ENCODE measurements at regions of chr14 and their contacts with region 1.

Region 1: DNA sequence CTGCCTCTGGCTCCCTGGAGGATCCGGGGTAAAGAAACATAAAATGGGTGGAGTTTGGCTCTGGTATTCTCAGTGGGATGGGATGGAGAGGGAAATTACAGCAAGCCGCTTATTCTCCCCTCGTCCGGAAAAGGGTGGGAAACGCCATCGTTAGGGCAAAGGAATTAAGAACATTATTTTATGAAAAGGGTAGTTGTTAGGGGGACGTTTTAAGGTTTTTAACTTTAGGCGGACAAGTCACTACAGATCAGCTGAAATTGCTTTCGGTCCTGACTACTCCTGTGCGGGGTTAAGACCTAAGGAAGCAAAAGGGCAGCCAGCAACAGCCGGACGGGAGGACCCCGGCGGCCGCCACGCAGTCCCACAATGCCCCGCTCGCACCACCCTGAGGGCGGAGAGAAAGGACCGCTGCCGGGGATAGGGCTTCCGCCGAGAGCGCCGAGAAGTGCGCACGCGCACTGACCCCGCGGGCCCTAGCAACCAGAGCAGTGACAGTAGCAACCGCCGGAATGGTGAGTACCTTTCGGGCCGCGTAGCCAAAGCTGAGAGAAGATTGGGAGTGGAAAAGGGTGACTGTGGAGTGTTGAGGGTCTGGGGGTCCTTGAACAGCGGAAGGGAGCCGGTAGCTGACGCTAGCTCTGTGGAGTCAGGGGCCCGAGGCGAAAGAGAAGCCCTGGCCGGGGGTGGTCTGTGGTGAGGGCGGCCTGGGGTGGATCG is at the start of gene DNAL1:
- DNase-seq: peak; percentile 83 to 94 (median 90)
- ATAC-seq: peak; percentile 97
- H3K4me3 ChIP-seq: peak within 1 kb of the TSS; percentile 67 to 72
- H3K4me3 Mint-ChIP-seq: peak within 1 kb of the TSS; percentile 89
- H3K27ac ChIP-seq: peak within 1 kb of the TSS; percentile 61 to 76
- H3K27ac Mint-ChIP-seq: peak within 1 kb of the TSS; percentile 85
- H3K4me1 ChIP-seq: peaks cover 15% of the 10 kb centered on the region
- H3K4me1 Mint-ChIP-seq: peaks cover 17% of the 10 kb centered on the region
- H3K27me3 ChIP-seq: no peaks in the 10 kb centered on the region
- H3K27me3 Mint-ChIP-seq: no peaks in the 10 kb centered on the region
- CTCF ChIP-seq: no peak
- total RNA-seq, gene DNAL1: 2.8 to 3.3 TPM

Region 2: GRCh38 chr14:71918952-71919351 is 1725.7 kb before region 1 on chr14:
- CTCF ChIA-PET with region 1: no interaction called
- POLR2A ChIA-PET with region 1: no interaction called
- intact Hi-C with region 1: no loop called
- DNase-seq: no peak
- ATAC-seq: no peak
- H3K4me3 ChIP-seq: no peak overlapping the region
- H3K4me3 Mint-ChIP-seq: no peak overlapping the region
- H3K27ac ChIP-seq: no peak overlapping the region
- H3K27ac Mint-ChIP-seq: no peak overlapping the region
- H3K4me1 ChIP-seq: no peaks in the 10 kb centered on the region
- H3K4me1 Mint-ChIP-seq: no peaks in the 10 kb centered on the region
- H3K27me3 ChIP-seq: peaks cover 0 to 4% of the 10 kb centered on the region in 2 experiments
- H3K27me3 Mint-ChIP-seq: peaks cover 14% of the 10 kb centered on the region
- CTCF ChIP-seq: no peak

Region 3: DNA sequence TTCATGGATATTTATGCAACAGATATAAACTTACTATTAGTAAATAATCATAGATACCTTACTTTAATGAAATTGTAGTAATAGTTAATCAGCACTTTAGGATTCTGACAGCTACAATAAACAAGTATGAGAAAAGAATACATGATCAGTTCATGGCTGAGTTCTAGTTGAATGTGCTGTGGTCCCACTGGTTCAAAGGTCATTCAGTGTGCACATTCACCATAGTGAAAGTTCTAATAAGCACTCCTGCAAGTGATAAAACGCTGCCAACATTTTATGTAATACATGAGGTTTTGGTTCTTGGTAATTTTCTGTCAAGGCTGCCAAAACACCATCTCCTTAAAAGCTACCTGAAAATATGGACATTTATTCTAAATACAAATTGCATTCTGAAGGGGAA is 279.0 kb before region 1 on chr14:
- CTCF ChIA-PET with region 1: no interaction called
- POLR2A ChIA-PET with region 1: no interaction called
- intact Hi-C with region 1: no loop called
- DNase-seq: no peak
- ATAC-seq: no peak
- H3K4me3 ChIP-seq: no peak overlapping the region
- H3K4me3 Mint-ChIP-seq: no peak overlapping the region
- H3K27ac ChIP-seq: no peak overlapping the region
- H3K27ac Mint-ChIP-seq: no peak overlapping the region
- H3K4me1 ChIP-seq: no peaks in the 10 kb centered on the region
- H3K4me1 Mint-ChIP-seq: no peaks in the 10 kb centered on the region
- H3K27me3 ChIP-seq: no peaks in the 10 kb centered on the region
- H3K27me3 Mint-ChIP-seq: no peaks in the 10 kb centered on the region
- CTCF ChIP-seq: no peak

Region 4: GRCh38 chr14:73491256-73492042 is 153.2 kb before region 1 on chr14:
- CTCF ChIA-PET with region 1: no interaction called
- POLR2A ChIA-PET with region 1: interaction called, 5 read pairs
- intact Hi-C with region 1: loop called in 1 of 2 experiments (anchors 1 kb)
- DNase-seq: peak in 8 of 9 experiments; percentile 31 to 86 (median 68)
- ATAC-seq: peak; percentile 72
- H3K4me3 ChIP-seq: peak overlapping the region; percentile 63 to 68
- H3K4me3 Mint-ChIP-seq: peak overlapping the region; percentile 86
- H3K27ac ChIP-seq: peak overlapping the region; percentile 66 to 78
- H3K27ac Mint-ChIP-seq: peak overlapping the region; percentile 91
- H3K4me1 ChIP-seq: peaks cover 37% of the 10 kb centered on the region
- H3K4me1 Mint-ChIP-seq: peaks cover 50% of the 10 kb centered on the region
- H3K27me3 ChIP-seq: no peaks in the 10 kb centered on the region
- H3K27me3 Mint-ChIP-seq: no peaks in the 10 kb centered on the region
- CTCF ChIP-seq: no peak

Region 5: GRCh38 chr14:73633116-73634010 is 11.3 kb before region 1 on chr14:
- CTCF ChIA-PET with region 1: interaction called, 5 read pairs
- POLR2A ChIA-PET with region 1: interaction called, 3 read pairs
- intact Hi-C with region 1: loop called in 1 of 2 experiments (anchors 1 kb)
- DNase-seq: peak; percentile 21 to 78 (median 60)
- ATAC-seq: peak; percentile 87
- H3K4me3 ChIP-seq: peak overlapping the region; percentile 56 to 59
- H3K4me3 Mint-ChIP-seq: peak overlapping the region; percentile 83
- H3K27ac ChIP-seq: no peak overlapping the region
- H3K27ac Mint-ChIP-seq: no peak overlapping the region
- H3K4me1 ChIP-seq: peaks cover 8% of the 10 kb centered on the region
- H3K4me1 Mint-ChIP-seq: peaks cover 6% of the 10 kb centered on the region
- H3K27me3 ChIP-seq: no peaks in the 10 kb centered on the region
- H3K27me3 Mint-ChIP-seq: peaks cover 8% of the 10 kb centered on the region
- CTCF ChIP-seq: peak; percentile 72

Region 6: DNA sequence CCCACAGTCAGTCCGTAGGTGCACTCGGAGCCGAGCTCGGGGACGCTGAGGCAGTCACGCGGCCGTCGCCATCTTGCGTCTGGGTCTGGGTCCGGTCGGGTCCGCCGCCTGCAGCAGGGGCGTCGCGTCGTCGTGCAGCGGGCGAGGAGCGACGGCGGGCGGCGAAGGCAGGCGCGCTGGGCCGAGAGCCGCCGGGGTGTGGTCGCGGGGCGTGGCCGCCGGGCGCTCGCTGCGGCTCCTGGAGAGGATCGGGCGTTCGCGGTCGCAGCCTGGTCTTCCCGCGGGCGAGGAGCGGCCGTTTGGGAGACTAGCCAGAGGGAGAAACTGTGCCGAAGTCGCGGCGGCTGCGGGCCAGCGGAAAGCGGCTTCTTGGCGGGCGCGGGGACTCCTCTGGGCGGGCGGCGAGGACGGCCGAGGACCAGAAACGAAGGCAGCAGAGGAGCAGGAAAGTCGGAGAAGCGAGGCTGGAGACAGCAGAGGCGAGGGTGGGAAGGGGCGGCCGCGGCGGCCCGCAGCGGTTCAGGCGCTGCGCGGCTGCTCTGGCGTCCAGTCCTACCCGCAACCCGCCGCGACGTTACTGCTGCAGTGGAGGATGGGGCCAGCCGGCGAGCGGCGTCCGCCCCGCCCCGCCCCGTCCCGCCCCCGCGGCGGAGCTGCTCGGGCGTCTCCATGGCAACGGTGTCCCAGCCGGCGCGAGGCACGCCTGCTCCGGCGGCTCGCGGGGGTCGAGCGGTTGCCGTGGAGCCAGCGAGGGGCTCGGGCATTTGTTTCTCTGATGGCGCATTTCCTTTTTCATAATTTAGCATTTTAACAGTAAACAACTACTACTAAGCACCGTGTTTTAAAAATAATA is 69.3 kb after region 1 on chr14 and contains the start of gene PNMA1:
- CTCF ChIA-PET with region 1: no interaction called
- POLR2A ChIA-PET with region 1: no interaction called
- intact Hi-C with region 1: loop called (anchors 2 kb)
- DNase-seq: peak; percentile 67 to 94 (median 87)
- ATAC-seq: peak; percentile 72
- H3K4me3 ChIP-seq: peak within 1 kb of the TSS; percentile 71 to 92
- H3K4me3 Mint-ChIP-seq: peak within 1 kb of the TSS; percentile 92
- H3K27ac ChIP-seq: peak within 1 kb of the TSS; percentile 76 to 77
- H3K27ac Mint-ChIP-seq: peak within 1 kb of the TSS; percentile 96
- H3K4me1 ChIP-seq: peaks cover 10% of the 10 kb centered on the region
- H3K4me1 Mint-ChIP-seq: peaks cover 34% of the 10 kb centered on the region
- H3K27me3 ChIP-seq: no peaks in the 10 kb centered on the region
- H3K27me3 Mint-ChIP-seq: no peaks in the 10 kb centered on the region
- CTCF ChIP-seq: no peak
- total RNA-seq, gene PNMA1: 39.4 to 39.8 TPM

Region 7: GRCh38 chr14:73851644-73852382 is 207.1 kb after region 1 on chr14 and contains the start of gene PTGR2:
- CTCF ChIA-PET with region 1: no interaction called
- POLR2A ChIA-PET with region 1: no interaction called
- intact Hi-C with region 1: loop called in 1 of 2 experiments (anchors 10 kb)
- DNase-seq: peak; percentile 77 to 97 (median 89)
- ATAC-seq: peak; percentile 93
- H3K4me3 ChIP-seq: peak within 1 kb of the TSS; percentile 47 to 63
- H3K4me3 Mint-ChIP-seq: peak within 1 kb of the TSS; percentile 90
- H3K27ac ChIP-seq: peak within 1 kb of the TSS; percentile 70 to 81
- H3K27ac Mint-ChIP-seq: peak within 1 kb of the TSS; percentile 98
- H3K4me1 ChIP-seq: peaks cover 6% of the 10 kb centered on the region
- H3K4me1 Mint-ChIP-seq: peaks cover 21% of the 10 kb centered on the region
- H3K27me3 ChIP-seq: no peaks in the 10 kb centered on the region
- H3K27me3 Mint-ChIP-seq: no peaks in the 10 kb centered on the region
- CTCF ChIP-seq: no peak
- total RNA-seq, gene PTGR2: 1.2 to 1.4 TPM

Measured in CD8-positive, alpha-beta T cell (primary cell).